ENCODE measurements at regions of chr1 and their contacts with region 1.

Region 1: DNA sequence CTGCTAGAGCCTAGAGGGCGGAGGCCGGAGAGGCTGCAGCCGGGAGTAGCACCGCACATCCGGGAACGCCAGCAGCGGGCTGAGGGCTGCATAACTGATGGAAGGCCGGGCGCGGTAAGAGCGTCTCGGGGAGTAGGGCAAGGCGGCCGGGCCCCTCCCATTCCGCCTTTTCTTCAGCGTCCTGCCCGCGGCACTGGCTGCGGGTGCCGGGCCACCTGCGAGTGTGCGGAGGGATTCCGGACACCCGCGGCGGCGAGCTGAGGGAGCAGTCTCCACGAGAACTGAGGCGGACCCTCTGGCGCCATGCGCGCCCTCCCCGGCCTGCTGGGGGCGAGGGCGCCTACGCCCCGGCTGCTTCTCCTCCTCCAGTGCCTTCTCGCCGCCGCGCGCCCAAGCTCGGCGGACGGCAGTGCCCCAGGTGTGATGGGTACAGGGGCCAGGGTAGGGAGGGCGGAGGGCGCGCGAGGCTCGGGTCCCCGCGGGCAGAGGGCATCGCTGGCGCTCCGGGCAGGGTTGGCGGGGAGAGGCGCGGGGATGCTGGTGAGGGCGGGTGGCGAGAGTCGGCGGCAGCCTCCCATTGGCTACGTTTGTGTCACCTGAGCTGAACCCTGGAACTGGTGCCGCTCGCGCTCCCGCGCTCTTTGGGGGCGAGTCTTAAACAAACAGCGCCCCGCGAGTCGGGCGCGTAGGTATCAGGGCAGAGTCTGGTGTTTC is 334.4 kb downstream of the SRGAP2C start:
- DNase-seq: peak; percentile 72 to 90 (median 78)
- ATAC-seq: peak; percentile 89
- H3K4me3 Mint-ChIP-seq: peak overlapping the region; percentile 67 to 96 (median 91)
- H3K27ac Mint-ChIP-seq: peak overlapping the region; percentile 83 to 96 (median 94)
- H3K4me1 Mint-ChIP-seq: peaks cover 28 to 59% (median 53%) of the 10 kb centered on the region in 4 donors
- H3K27me3 Mint-ChIP-seq: no peaks in the 10 kb centered on the region

Region 2: GRCh38 chr1:121546830-121547591 is 27.8 kb after region 1 on chr1:
- POLR2A ChIA-PET with region 1: interaction called, 18 read pairs
- DNase-seq: no peak
- ATAC-seq: peak in 1 of 2 donors; percentile 26
- H3K4me3 Mint-ChIP-seq: no peak overlapping the region
- H3K27ac Mint-ChIP-seq: peak overlapping the region in 4 of 10 donors; percentile 54 to 80 (median 56)
- H3K4me1 Mint-ChIP-seq: peaks cover 10 to 29% (median 24%) of the 10 kb centered on the region in 4 donors
- H3K27me3 Mint-ChIP-seq: no peaks in the 10 kb centered on the region

Measured in naive thymus-derived CD8-positive, alpha-beta T cell (primary cell).